Vagina (tissue), 2 donors: ENCODE measurements at regions of chr14 and their contacts with region 1.

Region 1: DNA sequence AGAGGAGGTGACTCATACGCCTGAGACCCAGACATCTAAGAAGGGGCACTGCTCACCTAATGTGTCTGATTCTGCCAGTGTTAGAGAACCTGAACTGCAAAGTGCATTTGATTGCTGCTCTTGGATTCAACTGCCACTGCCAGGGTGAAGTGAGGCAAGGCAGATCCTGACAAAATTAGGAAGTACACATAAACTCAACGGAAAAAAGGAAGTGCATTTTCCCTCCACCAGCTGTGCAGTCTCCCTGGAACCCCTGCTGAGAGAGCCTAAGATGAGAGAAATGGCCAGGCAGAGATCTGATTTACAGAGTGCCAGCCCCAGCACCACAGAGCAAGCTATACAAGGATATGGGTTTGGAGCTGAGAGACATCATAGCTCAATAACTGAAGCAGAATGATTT is 215.3 kb downstream of the SEC23A start:
- DNase-seq: no peak
- H3K4me3 ChIP-seq: no peak overlapping the region
- H3K27ac ChIP-seq: no peak overlapping the region
- H3K4me1 ChIP-seq: no peaks in the 10 kb centered on the region
- H3K27me3 ChIP-seq: no peaks in the 10 kb centered on the region
- CTCF ChIP-seq: no peak
- POLR2A ChIP-seq: no peak

Region 2: DNA sequence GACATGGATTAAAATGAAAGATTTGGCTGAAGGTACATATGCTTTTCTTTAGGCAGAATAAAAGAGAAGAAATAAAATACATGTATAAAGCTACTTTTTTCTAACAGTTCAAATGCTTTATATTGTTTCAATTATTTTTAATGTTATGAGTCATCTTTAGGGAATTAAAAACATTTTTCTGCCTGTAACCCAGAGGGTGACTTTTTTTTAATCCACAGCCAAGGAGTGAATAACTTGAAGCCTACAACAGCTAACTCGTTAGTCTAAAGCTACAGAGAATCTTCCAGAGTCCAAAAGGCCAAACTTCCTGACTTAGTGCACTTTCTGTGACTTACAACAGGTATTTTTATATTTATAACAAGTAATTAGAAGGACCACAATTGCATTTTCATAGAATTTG is 63.8 kb after region 1 on chr14:
- intact Hi-C with region 1: loop called (anchors 2 kb)
- DNase-seq: no peak
- H3K4me3 ChIP-seq: no peak overlapping the region
- H3K27ac ChIP-seq: no peak overlapping the region
- H3K4me1 ChIP-seq: no peaks in the 10 kb centered on the region
- H3K27me3 ChIP-seq: no peaks in the 10 kb centered on the region
- CTCF ChIP-seq: no peak
- POLR2A ChIP-seq: no peak

Region 3: DNA sequence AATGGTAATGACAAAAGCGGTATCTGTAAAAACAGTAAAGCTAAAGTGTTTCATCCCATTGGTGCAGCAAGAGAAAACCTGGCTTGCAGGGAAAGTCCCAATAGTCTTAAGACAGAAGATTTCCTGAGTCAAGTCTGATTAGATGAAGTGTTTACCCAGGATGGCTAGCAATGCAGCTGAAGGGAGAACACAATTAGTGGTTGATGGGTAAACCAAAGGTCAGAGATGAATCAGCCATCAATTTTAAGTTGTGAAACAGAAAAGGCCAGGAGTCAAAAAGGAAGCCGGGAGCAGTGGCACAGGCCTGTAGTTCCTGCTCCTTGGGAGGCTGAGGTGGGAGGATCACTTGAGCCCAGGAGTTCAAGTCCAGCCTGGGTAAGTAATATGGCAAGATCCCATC is 162.7 kb after region 1 on chr14:
- intact Hi-C with region 1: no loop called
- DNase-seq: no peak
- H3K4me3 ChIP-seq: no peak overlapping the region
- H3K27ac ChIP-seq: no peak overlapping the region
- H3K4me1 ChIP-seq: no peaks in the 10 kb centered on the region
- H3K27me3 ChIP-seq: no peaks in the 10 kb centered on the region
- CTCF ChIP-seq: no peak
- POLR2A ChIP-seq: no peak